H1 (cell line): ENCODE measurements at regions of chr4 and their contacts with region 1.

Region 1: DNA sequence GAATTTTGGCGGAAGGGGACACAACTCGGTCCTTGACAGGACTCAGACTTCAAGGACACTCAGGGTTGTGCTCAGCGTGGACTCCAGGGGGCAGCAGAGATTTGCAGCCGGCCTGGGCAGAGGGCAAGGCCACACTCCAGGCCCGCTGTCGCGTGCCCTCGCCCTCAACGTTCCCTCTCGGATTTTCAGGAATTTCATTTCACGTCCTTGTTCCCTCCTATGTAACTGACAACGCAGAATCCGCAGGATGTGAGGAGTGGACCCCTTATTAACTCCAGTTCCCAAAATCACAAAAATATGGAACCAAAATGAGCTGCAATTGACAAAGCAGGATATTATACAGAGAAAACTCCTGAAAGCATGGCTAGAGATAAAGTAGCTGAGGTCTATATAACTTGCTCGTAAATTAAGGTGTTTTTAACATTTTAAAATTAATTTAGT is 21.0 kb upstream of the DCTD start:
- DNase-seq: peak in 1 of 2 experiments; percentile 89
- H3K4me3 ChIP-seq: no peak overlapping the region
- H3K27ac ChIP-seq: no peak overlapping the region
- H3K4me1 ChIP-seq: peaks cover 0 to 4% (median 1%) of the 10 kb centered on the region in 4 experiments; a peak in 3 of 7 replicates
- H3K27me3 ChIP-seq: no peaks in the 10 kb centered on the region
- CTCF ChIP-seq: peak; percentile 88 to 97 (median 96)
- EP300 ChIP-seq: no peak
- POLR2A ChIP-seq: no peak
- RAD21 ChIP-seq: peak; percentile 93 to 96

Region 2: DNA sequence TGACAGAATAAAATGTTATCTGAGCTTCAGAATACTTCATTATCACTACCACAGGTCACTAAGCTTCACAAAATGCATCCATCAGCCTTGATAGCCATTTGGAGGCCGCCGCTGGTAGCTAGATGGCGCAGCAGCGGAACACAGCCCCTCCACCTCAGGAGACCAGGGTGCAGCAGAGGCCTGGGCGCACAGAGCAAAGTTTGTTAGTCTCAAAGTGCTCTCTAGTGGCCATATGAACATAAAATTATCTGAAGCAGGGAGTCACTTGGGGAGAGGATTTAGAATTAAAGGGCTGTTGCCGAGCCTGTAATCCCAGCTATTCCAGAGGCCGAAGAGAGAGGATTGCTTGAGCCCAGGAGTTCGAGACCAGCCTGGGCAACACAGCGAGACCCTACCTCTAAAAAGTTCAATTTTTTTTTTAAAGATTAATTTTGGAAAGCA is 12.9 kb before region 1 on chr4:
- CTCF ChIA-PET with region 1: interaction called, 74 read pairs
- POLR2A ChIA-PET with region 1: interaction called, 3 read pairs
- DNase-seq: peak; percentile 69 to 78
- H3K4me3 ChIP-seq: no peak overlapping the region
- H3K27ac ChIP-seq: no peak overlapping the region
- H3K4me1 ChIP-seq: no peaks in the 10 kb centered on the region; a peak in 1 of 7 replicates
- H3K27me3 ChIP-seq: no peaks in the 10 kb centered on the region
- CTCF ChIP-seq: peak; percentile 76 to 96 (median 89)
- EP300 ChIP-seq: no peak
- POLR2A ChIP-seq: no peak
- RAD21 ChIP-seq: peak; percentile 82 to 88

Region 3: GRCh38 chr4:182994171-182994570 is 55.9 kb after region 1 on chr4:
- CTCF ChIA-PET with region 1: no interaction called
- POLR2A ChIA-PET with region 1: no interaction called
- DNase-seq: no peak
- H3K4me3 ChIP-seq: no peak overlapping the region
- H3K27ac ChIP-seq: no peak overlapping the region
- H3K4me1 ChIP-seq: no peaks in the 10 kb centered on the region
- H3K27me3 ChIP-seq: no peaks in the 10 kb centered on the region
- CTCF ChIP-seq: no peak
- EP300 ChIP-seq: no peak
- POLR2A ChIP-seq: no peak
- RAD21 ChIP-seq: no peak

Region 4: DNA sequence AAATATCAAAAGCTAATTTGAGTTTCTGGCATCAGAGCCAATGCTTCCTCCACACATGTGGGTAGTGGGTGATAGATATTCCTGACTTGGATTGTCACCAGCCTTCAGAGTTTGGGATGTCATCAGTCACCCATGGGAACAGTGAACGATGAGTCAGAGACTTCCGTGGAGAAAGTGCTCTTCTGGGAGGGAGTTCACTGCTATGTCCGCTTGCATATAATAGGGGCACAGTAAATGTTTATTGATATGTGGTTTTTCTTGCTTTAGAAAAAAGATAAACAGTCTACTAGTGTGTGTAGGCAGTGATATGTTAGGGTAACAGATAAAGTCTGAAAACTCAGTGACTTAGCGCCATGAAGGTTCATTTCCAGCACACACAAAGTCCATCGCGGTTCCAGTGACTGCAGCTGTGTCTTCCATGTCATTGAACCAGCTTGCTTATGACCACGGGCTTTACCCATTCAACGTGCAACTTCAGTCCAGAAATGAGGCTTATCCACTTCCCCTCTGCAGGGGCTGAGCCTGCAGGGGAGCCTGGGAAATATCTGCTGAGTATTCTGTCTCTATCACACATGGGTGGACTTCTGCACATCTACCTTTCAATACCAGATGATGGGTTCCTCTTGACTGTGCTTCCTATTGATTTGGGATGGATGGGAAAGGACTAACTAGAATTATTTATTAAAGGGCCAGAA is 73.1 kb after region 1 on chr4:
- CTCF ChIA-PET with region 1: interaction called, 20 read pairs
- POLR2A ChIA-PET with region 1: no interaction called
- DNase-seq: peak in 1 of 2 experiments; percentile 13
- H3K4me3 ChIP-seq: no peak overlapping the region
- H3K27ac ChIP-seq: no peak overlapping the region
- H3K4me1 ChIP-seq: peaks cover 0 to 4% (median 2%) of the 10 kb centered on the region in 4 experiments; a peak in 2 of 7 replicates
- H3K27me3 ChIP-seq: peaks cover 0 to 2% (median 0%) of the 10 kb centered on the region in 4 experiments; a peak in 3 of 7 replicates
- CTCF ChIP-seq: no peak
- EP300 ChIP-seq: no peak
- POLR2A ChIP-seq: no peak
- RAD21 ChIP-seq: no peak

Region 5: GRCh38 chr4:183249857-183250256 is 311.6 kb after region 1 on chr4:
- CTCF ChIA-PET with region 1: interaction called, 50 read pairs
- POLR2A ChIA-PET with region 1: no interaction called
- DNase-seq: no peak
- H3K4me3 ChIP-seq: no peak overlapping the region
- H3K27ac ChIP-seq: no peak overlapping the region
- H3K4me1 ChIP-seq: no peaks in the 10 kb centered on the region
- H3K27me3 ChIP-seq: no peaks in the 10 kb centered on the region
- CTCF ChIP-seq: peak in 2 of 3 experiments; percentile 36 to 50; a peak in 2 of 4 replicates
- EP300 ChIP-seq: no peak
- POLR2A ChIP-seq: no peak
- RAD21 ChIP-seq: peak; percentile 74 to 76

Region 6: DNA sequence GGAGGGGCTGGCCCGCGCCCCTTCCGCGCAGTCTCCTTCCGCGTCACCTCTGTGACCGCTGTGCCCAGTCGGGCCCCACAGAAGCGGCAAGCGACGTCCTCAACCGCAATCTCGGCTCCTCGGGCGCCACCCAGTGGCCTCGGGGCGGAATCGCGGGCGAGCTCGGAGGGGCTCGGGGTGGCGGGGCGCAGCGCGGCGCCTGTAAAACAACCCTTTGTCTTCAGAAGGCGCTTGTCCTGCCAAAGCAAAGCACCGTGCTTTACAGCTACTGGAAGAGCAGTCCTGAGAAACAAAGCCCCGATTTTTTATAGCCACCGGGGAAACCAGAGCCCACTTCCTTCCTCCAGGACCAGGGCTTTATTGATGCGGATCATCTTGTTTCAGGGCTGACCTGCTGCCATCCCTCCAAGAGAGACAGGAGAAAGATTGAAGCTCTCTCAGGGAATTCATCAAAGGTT is 468.9 kb after region 1 on chr4:
- CTCF ChIA-PET with region 1: interaction called, 10 read pairs
- POLR2A ChIA-PET with region 1: no interaction called
- DNase-seq: peak; percentile 59 to 99
- H3K4me3 ChIP-seq: peak overlapping the region; percentile 24 to 51 (median 38); a peak in 7 of 8 replicates
- H3K27ac ChIP-seq: no peak overlapping the region
- H3K4me1 ChIP-seq: no peaks in the 10 kb centered on the region
- H3K27me3 ChIP-seq: no peaks in the 10 kb centered on the region
- CTCF ChIP-seq: peak; percentile 86 to 94 (median 88)
- EP300 ChIP-seq: peak in 1 of 2 experiments; percentile 45; a peak in 1 of 3 replicates
- POLR2A ChIP-seq: peak; percentile 38 to 78
- RAD21 ChIP-seq: peak; percentile 87 to 95